ENCODE measurements at regions of chr6 and their contacts with region 1.

Region 1: GRCh38 chr6:118934461-118935330 is at the start of gene MCM9:
- DNase-seq: peak; percentile 95
- H3K4me3 ChIP-seq: peak within 1 kb of the TSS; percentile 79 to 92 (median 80)
- H3K27ac ChIP-seq: peak within 1 kb of the TSS; percentile 85
- H3K4me1 ChIP-seq: peaks cover 10% of the 10 kb centered on the region
- H3K27me3 ChIP-seq: no peaks in the 10 kb centered on the region
- CTCF ChIP-seq: no peak
- POLR2A ChIP-seq: peak; percentile 66
- total RNA-seq, gene MCM9: 14.1 and 14.6 TPM in 2 replicates

Region 2: GRCh38 chr6:118952683-118953082 is 18.0 kb after region 1 on chr6:
- CTCF ChIA-PET with region 1: no interaction called
- POLR2A ChIA-PET with region 1: no interaction called
- dilution Hi-C with region 1: no loop called
- intact Hi-C with region 1: no loop called
- DNase-seq: no peak
- H3K4me3 ChIP-seq: no peak overlapping the region
- H3K27ac ChIP-seq: no peak overlapping the region
- H3K4me1 ChIP-seq: no peaks in the 10 kb centered on the region
- H3K27me3 ChIP-seq: no peaks in the 10 kb centered on the region
- CTCF ChIP-seq: no peak
- POLR2A ChIP-seq: no peak

Region 3: GRCh38 chr6:119078376-119079282 is 143.9 kb after region 1 on chr6 and contains the start of gene FAM184A:
- CTCF ChIA-PET with region 1: no interaction called
- POLR2A ChIA-PET with region 1: no interaction called
- dilution Hi-C with region 1: no loop called
- intact Hi-C with region 1: loop called (anchors 1 kb)
- DNase-seq: peak; percentile 67
- H3K4me3 ChIP-seq: peak within 1 kb of the TSS; percentile 48 to 68 (median 50)
- H3K27ac ChIP-seq: no peak within 1 kb of the TSS
- H3K4me1 ChIP-seq: peaks cover 21% of the 10 kb centered on the region
- H3K27me3 ChIP-seq: peaks cover 16 to 23% of the 10 kb centered on the region in 2 experiments
- CTCF ChIP-seq: peak; percentile 16 to 63
- POLR2A ChIP-seq: no peak
- total RNA-seq, gene FAM184A: 0.84 and 0.95 TPM in 2 replicates

Region 4: GRCh38 chr6:119090256-119090655 is 155.6 kb after region 1 on chr6:
- CTCF ChIA-PET with region 1: no interaction called
- POLR2A ChIA-PET with region 1: no interaction called
- dilution Hi-C with region 1: no loop called
- intact Hi-C with region 1: no loop called
- DNase-seq: no peak
- H3K4me3 ChIP-seq: no peak overlapping the region
- H3K27ac ChIP-seq: no peak overlapping the region
- H3K4me1 ChIP-seq: no peaks in the 10 kb centered on the region
- H3K27me3 ChIP-seq: peaks cover 0 to 8% of the 10 kb centered on the region in 2 experiments
- CTCF ChIP-seq: no peak
- POLR2A ChIP-seq: no peak

Measured in endothelial cell of umbilical vein (primary cell).